ENCODE measurements at regions of chr9 and their contacts with region 1.

Region 1: DNA sequence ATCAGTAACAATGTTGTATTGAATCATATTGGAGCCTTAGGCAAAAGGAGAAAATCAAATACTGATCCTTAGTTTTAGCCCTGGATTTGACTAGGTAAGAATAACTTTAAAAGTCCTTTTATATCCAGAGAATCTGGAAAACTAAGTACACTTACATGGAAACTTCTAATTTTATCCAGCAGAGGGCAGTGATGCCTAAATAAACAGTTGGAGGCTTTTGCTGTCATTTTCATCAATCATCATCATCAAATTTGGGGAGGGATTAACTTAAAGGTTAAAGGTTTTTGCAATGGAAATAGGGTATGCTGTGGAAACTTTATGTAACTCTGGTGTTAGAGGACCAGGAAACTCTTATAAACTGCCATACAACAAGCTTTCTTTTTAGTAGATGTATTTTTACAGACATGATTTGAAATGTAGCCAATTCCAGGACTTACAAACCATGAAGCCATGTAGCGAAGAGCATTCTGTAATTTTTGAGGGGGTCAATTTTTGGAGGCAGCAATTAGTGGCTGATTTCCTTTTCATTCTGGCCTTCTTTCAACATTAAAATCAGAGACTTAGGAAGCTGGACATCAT is 112.7 kb downstream of the OSTF1 start:
- DNase-seq: no peak
- H3K4me3 Mint-ChIP-seq: no peak overlapping the region
- H3K27ac Mint-ChIP-seq: no peak overlapping the region
- H3K4me1 Mint-ChIP-seq: peaks cover 3% of the 10 kb centered on the region
- H3K27me3 Mint-ChIP-seq: no peaks in the 10 kb centered on the region

Region 2: DNA sequence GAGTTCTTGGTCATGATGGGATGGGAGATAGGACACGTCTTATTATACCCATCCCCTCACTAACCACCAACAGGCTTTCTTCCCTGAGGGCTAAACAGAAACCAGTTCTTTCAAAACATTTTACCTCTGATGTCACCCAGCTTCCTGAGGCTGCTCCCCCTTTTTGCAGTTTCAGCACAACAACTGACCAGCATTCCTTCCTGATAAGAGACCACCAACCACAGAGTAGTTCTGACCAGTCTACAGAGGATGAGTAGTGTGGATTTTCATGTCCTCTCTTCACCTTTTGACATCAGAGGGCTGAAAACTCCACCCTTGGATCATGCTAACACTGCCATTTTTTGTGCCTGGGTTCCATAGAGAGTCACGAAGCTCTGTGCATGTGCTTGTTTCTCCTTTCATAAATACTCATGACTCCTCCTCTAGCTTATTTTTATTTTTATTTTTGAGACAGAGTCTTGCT is 30.1 kb before region 1 on chr9:
- CTCF ChIA-PET with region 1: no interaction called
- POLR2A ChIA-PET with region 1: no interaction called
- DNase-seq: no peak
- H3K4me3 Mint-ChIP-seq: no peak overlapping the region
- H3K27ac Mint-ChIP-seq: peak overlapping the region; percentile 59
- H3K4me1 Mint-ChIP-seq: peaks cover 66% of the 10 kb centered on the region
- H3K27me3 Mint-ChIP-seq: no peaks in the 10 kb centered on the region

Region 3: DNA sequence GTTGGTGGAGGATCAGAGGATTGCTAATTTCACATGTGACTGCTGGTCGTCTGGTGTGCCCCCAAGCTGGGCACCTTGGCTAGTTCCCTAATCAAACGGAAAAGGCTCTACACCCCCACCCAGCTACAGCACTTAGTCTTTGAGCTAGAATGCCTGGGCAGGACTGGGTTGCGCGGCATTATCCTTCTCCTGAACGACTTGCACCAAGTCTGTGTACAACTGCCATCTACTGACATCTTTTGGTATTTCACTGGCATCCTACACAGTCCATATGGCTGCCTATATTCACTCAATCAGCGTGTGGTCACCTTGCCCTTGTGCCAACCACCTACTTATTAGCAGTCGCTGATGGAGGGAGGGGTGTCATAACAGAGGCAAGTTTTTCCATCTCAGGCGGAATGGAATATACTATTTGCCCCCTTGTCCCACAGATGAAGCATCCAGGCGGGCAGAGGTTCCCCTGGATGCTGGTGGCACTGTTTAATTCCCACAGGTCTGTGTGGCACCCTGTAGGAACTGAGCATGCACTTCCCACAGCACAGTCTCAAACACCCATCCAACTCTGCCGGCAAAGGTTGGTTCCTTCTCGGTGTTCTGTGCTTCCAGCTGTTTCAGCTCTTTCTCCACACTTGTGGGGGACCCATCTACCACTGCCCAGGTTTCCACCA is 37.5 kb after region 1 on chr9:
- CTCF ChIA-PET with region 1: interaction called, 15 read pairs
- POLR2A ChIA-PET with region 1: no interaction called
- DNase-seq: peak; percentile 49
- H3K4me3 Mint-ChIP-seq: no peak overlapping the region
- H3K27ac Mint-ChIP-seq: no peak overlapping the region
- H3K4me1 Mint-ChIP-seq: no peaks in the 10 kb centered on the region
- H3K27me3 Mint-ChIP-seq: no peaks in the 10 kb centered on the region

Measured in activated CD4-positive, alpha-beta memory T cell treated with anti-CD3 and anti-CD28 coated beads, Interleukin-2, amount 10 ng/mL, durations not matched to agents 7 days and 5 days (primary cell).